ENCODE measurements at regions of chr3 and their contacts with region 1.

Region 1: GRCh38 chr3:185983495-185984141 is 45.8 kb upstream of the TRA2B start:
- DNase-seq: peak; percentile 75
- H3K4me3 ChIP-seq: no peak overlapping the region
- H3K27ac ChIP-seq: no peak overlapping the region
- H3K4me1 ChIP-seq: no peaks in the 10 kb centered on the region
- H3K27me3 ChIP-seq: 0 out of 2 replicates have a peak, but pooled peaks cover 4% of the 10 kb centered on the region

Region 2: GRCh38 chr3:186162221-186162620 is 178.6 kb after region 1 on chr3:
- in situ Hi-C with region 1: no loop called
- DNase-seq: no peak
- H3K4me3 ChIP-seq: no peak overlapping the region
- H3K27ac ChIP-seq: no peak overlapping the region
- H3K4me1 ChIP-seq: no peaks in the 10 kb centered on the region
- H3K27me3 ChIP-seq: peaks cover 48% of the 10 kb centered on the region

Region 3: DNA sequence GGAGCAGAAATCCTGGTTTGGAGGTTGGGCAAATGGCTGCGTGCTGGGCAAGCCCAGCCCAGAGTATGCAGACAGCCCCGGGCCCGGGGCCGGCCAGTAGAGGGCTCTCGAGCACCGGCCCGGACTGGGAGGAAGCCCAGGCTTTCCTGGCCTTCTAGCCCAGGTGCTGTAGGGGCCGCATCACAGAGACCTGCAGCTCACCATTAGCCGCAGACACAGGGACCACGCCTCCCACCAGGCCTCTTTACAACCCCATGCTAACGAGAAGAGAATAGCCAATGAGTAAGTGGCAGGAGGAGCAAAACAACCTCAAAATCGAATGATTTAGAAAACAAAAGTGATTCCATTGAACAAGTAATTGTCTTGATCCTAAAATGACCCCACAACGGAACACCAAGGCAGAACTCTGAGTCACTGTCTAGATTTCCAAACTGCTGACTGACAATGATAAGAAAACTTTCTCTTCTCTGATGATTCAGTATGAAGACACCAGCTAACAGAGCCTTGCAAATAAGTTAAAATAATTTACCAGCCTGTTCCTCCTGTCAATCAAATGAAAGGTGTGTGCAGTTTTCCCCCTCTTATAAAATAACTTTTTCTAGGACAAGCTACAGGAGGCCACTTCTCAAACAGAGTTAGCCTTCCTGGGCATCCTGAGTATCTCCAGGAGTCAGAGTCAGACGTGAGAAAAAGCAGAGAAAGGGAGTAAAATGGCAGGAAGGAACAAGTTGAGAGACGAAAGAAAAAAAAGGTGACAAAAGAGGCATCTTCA is 276.2 kb after region 1 on chr3:
- in situ Hi-C with region 1: loop called (anchors 10 kb)
- DNase-seq: peak; percentile 72
- H3K4me3 ChIP-seq: no peak overlapping the region
- H3K27ac ChIP-seq: no peak overlapping the region
- H3K4me1 ChIP-seq: peaks cover 4% of the 10 kb centered on the region; the same call in 1 of the 2 replicates
- H3K27me3 ChIP-seq: peaks cover 79% of the 10 kb centered on the region

Region 4: DNA sequence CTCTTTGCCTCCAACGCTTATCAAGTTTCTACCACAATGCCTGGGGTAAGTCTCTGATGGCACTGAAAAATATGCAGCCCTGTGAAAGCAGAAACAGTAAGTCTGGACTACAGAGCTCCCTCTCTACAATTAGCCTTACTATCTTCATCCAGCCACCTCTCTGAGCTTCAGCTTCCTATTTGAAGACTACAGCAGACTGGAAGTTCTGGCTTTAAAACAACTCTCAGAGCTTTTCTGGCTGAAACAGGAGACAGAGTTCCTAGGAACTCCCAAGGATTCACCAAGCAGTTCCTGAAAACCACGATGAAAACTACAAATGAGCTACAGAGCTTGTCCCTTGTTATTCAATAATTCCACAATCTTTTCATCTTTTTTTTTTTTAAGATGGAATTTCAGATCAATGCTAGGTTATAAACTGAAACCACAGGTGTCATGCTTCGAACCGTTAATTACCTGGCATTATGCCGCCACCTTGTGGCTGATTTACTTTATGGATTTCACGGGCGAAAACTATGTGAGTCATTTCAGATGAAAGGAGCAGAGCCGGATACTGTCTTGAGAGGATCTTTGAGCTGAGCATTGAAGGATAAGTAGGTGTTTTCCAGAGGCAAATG is 556.7 kb after region 1 on chr3:
- in situ Hi-C with region 1: loop called (anchors 10 kb)
- DNase-seq: peak; percentile 85
- H3K4me3 ChIP-seq: no peak overlapping the region
- H3K27ac ChIP-seq: no peak overlapping the region
- H3K4me1 ChIP-seq: peaks cover 17% of the 10 kb centered on the region
- H3K27me3 ChIP-seq: no peaks in the 10 kb centered on the region